GM12878 (cell line): ENCODE measurements at regions of chr2 and their contacts with region 1.

Region 1: DNA sequence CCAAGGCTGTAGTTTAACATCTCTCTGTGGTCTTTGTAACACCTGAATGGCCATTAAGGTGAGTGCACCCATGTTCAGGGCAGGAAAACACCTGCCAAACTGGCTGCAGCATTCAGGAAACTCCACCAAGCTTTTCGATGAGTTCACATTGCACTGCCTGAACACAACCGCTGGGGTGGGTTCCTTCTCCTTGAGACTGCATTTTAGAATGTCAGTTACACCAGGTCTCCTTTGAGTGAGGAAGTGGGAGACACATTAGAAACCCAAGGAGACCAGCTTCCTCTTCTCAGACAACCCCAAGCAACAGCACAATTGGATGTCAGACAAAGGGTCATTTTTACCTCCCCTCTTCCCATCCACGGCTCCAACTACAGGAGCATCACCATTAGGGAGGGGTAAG is 35.2 kb downstream of the CYRIA start:
- DNase-seq: no peak
- ATAC-seq: peak; percentile 69
- H3K4me3 ChIP-seq: no peak overlapping the region
- H3K27ac ChIP-seq: no peak overlapping the region
- H3K4me1 ChIP-seq: peaks cover 10% of the 10 kb centered on the region
- H3K27me3 ChIP-seq: peaks cover 0 to 16% of the 10 kb centered on the region in 2 experiments
- CTCF ChIP-seq: peak; percentile 18 to 31 (median 27); a peak in 3 of 6 replicates
- EP300 ChIP-seq: no peak
- POLR2A ChIP-seq: no peak
- RAD21 ChIP-seq: peak; percentile 60

Region 2: GRCh38 chr2:16578081-16578768 is 52.2 kb before region 1 on chr2:
- CTCF ChIA-PET with region 1: no interaction called
- POLR2A ChIA-PET with region 1: no interaction called
- RAD21 ChIA-PET with region 1: no interaction called
- SMC1A ChIA-PET with region 1: no interaction called
- in situ Hi-C with region 1: no loop called
- intact Hi-C with region 1: no loop called
- DNase-seq: no peak
- ATAC-seq: no peak
- H3K4me3 ChIP-seq: no peak overlapping the region
- H3K27ac ChIP-seq: no peak overlapping the region
- H3K4me1 ChIP-seq: no peaks in the 10 kb centered on the region
- H3K27me3 ChIP-seq: no peaks in the 10 kb centered on the region
- CTCF ChIP-seq: no peak
- EP300 ChIP-seq: no peak
- POLR2A ChIP-seq: no peak
- RAD21 ChIP-seq: no peak

Region 3: DNA sequence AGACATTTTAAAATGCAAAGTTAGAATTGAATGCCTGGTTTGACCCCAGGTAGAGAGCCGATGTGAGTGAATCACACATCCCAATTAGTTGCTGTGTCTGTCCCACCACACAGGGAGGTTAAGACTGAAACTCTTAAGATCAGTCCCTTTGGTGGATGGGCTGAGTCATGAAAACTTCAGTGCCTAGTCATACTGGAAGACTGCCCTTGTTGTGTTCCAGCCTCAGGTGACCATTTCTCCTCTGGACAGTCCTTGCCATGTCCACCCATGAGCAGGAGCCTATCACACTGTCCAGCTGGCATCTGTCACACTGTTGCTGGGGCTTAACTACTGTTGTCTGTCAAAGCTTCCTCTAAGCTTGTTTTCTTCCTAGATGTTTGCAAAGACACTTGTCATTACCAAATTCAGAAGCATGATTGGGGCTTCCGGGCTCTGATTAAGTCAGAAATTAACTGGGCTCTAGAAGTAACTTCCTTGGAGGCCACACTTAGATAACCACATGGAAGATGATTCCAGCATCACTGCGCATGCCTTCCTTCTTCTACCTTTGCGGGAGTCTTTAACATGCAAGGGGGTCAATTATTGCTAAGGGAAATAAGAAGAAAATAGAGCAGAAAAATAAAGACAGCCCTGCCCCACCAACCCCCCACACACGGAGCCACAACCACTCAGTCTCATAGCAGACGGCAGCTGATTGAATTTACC is 13.9 kb after region 1 on chr2:
- CTCF ChIA-PET with region 1: interaction called, 6 read pairs
- POLR2A ChIA-PET with region 1: interaction called, 3 read pairs
- RAD21 ChIA-PET with region 1: interaction called, 3 read pairs
- SMC1A ChIA-PET with region 1: interaction called, 14 read pairs
- in situ Hi-C with region 1: no loop called
- intact Hi-C with region 1: no loop called
- DNase-seq: no peak
- ATAC-seq: peak; percentile 79
- H3K4me3 ChIP-seq: no peak overlapping the region
- H3K27ac ChIP-seq: no peak overlapping the region
- H3K4me1 ChIP-seq: no peaks in the 10 kb centered on the region
- H3K27me3 ChIP-seq: peaks cover 0 to 5% of the 10 kb centered on the region in 2 experiments; a peak in 1 of 4 replicates
- CTCF ChIP-seq: no peak
- EP300 ChIP-seq: 0 out of 4 replicates have a peak, but pooled peaks of 1 of the 2 experiments have one; percentile 13
- POLR2A ChIP-seq: no peak
- RAD21 ChIP-seq: no peak